Activated CD4-positive, alpha-beta T cell treated with anti-CD3 and anti-CD28 coated beads for 36 hours (primary cell): ENCODE measurements at regions of chr14 and their contacts with region 1.

Region 1: GRCh38 chr14:102694530-102695166 is 82.6 kb upstream of the TRAF3 start:
- DNase-seq: peak; percentile 68
- ATAC-seq: peak; percentile 73
- H3K4me3 Mint-ChIP-seq: no peak overlapping the region
- H3K27ac Mint-ChIP-seq: no peak overlapping the region
- H3K4me1 Mint-ChIP-seq: peaks cover 30% of the 10 kb centered on the region
- H3K27me3 Mint-ChIP-seq: no peaks in the 10 kb centered on the region

Region 2: GRCh38 chr14:102524466-102525218 is 170.0 kb before region 1 on chr14:
- CTCF ChIA-PET with region 1: interaction called, 7 read pairs
- POLR2A ChIA-PET with region 1: no interaction called
- intact Hi-C with region 1: loop called in 1 of 2 experiments (anchors 10 kb)
- DNase-seq: peak; percentile 98
- ATAC-seq: peak; percentile 98
- H3K4me3 Mint-ChIP-seq: peak overlapping the region; percentile 68
- H3K27ac Mint-ChIP-seq: peak overlapping the region; percentile 32
- H3K4me1 Mint-ChIP-seq: peaks cover 35% of the 10 kb centered on the region
- H3K27me3 Mint-ChIP-seq: no peaks in the 10 kb centered on the region

Region 3: DNA sequence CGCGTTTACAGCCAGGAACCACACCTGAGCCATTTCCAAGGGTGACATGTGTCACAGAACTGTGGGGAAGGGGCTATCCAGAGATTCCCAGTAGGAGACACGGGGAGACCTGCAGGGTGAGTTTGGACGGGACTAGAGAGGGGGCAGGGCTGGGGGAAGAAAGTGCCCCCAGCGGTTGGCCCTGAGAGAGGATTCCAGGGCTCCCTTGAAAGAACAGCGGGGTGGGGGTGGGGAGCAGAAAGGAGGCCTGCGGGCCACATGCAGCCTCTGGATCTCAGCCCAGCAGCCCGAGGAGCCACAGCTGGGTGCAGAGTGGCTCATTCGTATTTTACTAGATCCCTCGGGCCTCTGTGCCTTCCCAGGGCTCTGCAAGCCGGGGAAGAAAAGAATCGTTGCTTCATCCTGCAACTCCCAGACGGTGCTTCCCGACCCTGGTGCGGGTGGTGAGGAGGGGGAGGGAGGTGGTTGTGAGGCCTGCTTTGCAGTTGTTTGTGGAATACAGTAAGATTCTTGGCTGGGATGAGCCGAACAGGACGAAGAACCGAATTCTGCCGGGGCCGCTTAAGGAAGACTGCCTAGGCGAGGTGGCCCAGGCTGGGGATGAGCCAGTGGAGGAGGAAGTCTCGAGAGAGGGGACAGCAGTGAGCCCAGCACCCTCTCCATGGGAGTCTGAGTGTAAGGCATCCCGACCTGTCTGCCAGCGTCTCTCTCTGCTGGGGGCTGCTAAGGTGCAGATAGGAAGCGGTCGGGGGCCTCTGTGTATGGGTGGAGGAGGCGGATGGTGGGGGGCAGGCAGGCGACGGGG is 149.0 kb before region 1 on chr14:
- CTCF ChIA-PET with region 1: no interaction called
- POLR2A ChIA-PET with region 1: no interaction called
- intact Hi-C with region 1: no loop called
- DNase-seq: no peak
- ATAC-seq: no peak
- H3K4me3 Mint-ChIP-seq: no peak overlapping the region
- H3K27ac Mint-ChIP-seq: no peak overlapping the region
- H3K4me1 Mint-ChIP-seq: peaks cover 3% of the 10 kb centered on the region
- H3K27me3 Mint-ChIP-seq: peaks cover 29% of the 10 kb centered on the region

Region 4: GRCh38 chr14:102708494-102708893 is 13.8 kb after region 1 on chr14:
- CTCF ChIA-PET with region 1: interaction called, 16 read pairs
- POLR2A ChIA-PET with region 1: interaction called, 3 read pairs
- intact Hi-C with region 1: no loop called
- DNase-seq: no peak
- ATAC-seq: no peak
- H3K4me3 Mint-ChIP-seq: no peak overlapping the region
- H3K27ac Mint-ChIP-seq: no peak overlapping the region
- H3K4me1 Mint-ChIP-seq: no peaks in the 10 kb centered on the region
- H3K27me3 Mint-ChIP-seq: no peaks in the 10 kb centered on the region

Region 5: GRCh38 chr14:102917469-102918211 is 223.0 kb after region 1 on chr14:
- CTCF ChIA-PET with region 1: interaction called, 6 read pairs
- POLR2A ChIA-PET with region 1: interaction called, 4 read pairs
- intact Hi-C with region 1: loop called (anchors 1 kb)
- DNase-seq: peak; percentile 82
- ATAC-seq: peak; percentile 52
- H3K4me3 Mint-ChIP-seq: no peak overlapping the region
- H3K27ac Mint-ChIP-seq: peak overlapping the region; percentile 48
- H3K4me1 Mint-ChIP-seq: no peaks in the 10 kb centered on the region
- H3K27me3 Mint-ChIP-seq: no peaks in the 10 kb centered on the region

Region 6: DNA sequence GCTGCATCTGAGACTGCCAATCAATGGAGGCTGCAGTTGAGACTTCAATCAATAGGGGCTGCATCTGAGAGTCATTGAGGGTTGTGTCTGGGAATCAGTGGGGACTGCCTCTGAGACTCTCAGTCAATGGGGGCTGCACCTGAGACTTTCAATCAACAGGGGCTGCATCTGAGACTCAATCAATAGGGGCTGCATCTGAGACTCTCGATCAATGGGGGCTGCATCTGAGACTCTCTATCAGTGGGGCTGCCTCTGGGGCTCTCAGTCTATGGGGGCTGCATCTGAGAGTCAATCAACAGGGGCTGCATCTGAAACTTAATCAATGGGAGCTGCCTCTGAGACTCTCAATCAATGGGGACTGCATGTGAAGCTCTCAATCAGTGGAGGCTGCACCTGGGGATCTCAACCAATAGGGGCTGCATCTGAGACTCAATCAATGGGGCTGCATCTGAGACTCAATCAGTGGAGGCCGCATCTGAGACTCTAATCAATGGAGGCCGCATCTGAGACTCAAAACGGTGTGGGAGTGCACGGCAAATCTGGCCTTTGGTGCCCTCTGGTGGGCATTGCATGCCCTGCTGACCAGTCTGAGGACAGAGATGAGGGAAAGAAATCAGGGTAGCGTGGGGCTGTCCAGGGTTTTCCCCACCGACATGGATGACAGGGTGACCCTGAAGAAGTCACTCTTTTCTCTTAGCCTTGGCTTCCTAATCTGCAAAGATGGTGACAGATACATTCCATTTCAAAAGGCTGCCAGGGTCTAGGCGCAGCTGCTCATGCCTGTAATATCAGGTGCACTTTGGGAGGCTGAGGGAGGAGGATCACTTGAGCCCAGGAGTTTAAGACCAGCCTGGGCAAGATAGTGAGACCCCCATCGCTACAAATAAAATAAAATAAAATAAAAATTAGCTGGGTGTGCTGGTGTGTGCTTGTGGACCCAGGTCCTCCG is 598.1 kb after region 1 on chr14:
- CTCF ChIA-PET with region 1: interaction called, 4 read pairs
- POLR2A ChIA-PET with region 1: no interaction called
- intact Hi-C with region 1: loop called in 1 of 2 experiments (anchors 5 kb)
- DNase-seq: peak; percentile 89
- ATAC-seq: peak; percentile 97
- H3K4me3 Mint-ChIP-seq: no peak overlapping the region
- H3K27ac Mint-ChIP-seq: no peak overlapping the region
- H3K4me1 Mint-ChIP-seq: no peaks in the 10 kb centered on the region
- H3K27me3 Mint-ChIP-seq: peaks cover 9% of the 10 kb centered on the region